Activated CD8-positive, alpha-beta T cell treated with anti-CD3 and anti-CD28 coated beads, Interleukin-2, amount 10 ng/mL, durations not matched to agents 7 days and 5 days (primary cell): ENCODE measurements at regions of chr12 and their contacts with region 1.

Region 1: GRCh38 chr12:49515266-49515665 is 23.6 kb upstream of the KCNH3 start:
- DNase-seq: no peak
- ATAC-seq: no peak
- H3K4me3 Mint-ChIP-seq: no peak overlapping the region
- H3K27ac Mint-ChIP-seq: no peak overlapping the region
- H3K4me1 Mint-ChIP-seq: no peaks in the 10 kb centered on the region
- H3K27me3 Mint-ChIP-seq: no peaks in the 10 kb centered on the region

Region 2: DNA sequence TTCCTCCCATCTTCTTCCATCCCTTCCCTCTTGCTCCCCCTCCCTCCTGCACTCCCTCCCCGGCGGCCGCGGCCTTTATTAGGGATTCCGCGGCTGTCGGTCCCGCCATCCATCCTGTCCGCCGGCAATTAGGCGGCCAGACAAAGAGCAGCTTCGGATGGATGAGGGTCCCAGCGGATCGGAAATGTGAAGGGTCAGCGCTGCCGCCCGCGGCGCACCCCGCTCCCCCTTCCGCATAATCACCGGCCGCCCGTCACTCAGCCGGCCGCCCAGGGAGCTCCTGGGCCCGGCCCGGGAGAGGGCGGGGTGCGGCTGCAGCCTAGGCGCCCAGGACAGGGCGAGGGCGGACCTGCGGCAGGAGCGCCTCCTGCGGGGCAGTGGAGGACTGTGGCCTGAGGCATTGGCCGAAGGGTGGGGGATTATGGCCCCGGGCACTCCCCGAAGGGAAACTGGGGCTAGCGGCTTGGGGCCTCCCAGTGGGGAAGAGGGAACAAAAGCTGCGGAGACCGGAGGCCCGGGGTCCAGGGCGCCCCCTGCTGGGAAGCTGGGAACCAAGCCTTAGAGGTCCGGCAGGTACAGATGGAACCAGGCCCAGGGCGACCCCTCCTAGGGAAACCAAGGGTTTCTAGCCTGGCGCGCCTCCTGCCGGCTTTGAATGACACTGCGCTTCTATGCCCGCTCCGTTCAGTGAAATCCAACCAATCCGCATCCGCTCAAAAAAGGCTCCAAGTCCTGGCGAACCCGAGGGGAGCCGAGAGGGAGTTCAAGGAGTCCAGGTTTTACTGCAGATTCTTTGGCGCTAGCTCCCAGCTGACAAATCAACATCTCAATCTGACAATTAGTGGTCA is 173.0 kb before region 1 on chr12:
- CTCF ChIA-PET with region 1: interaction called, 68 read pairs
- POLR2A ChIA-PET with region 1: no interaction called
- DNase-seq: peak; percentile 84
- ATAC-seq: peak; percentile 73
- H3K4me3 Mint-ChIP-seq: peak overlapping the region; percentile 34
- H3K27ac Mint-ChIP-seq: no peak overlapping the region
- H3K4me1 Mint-ChIP-seq: peaks cover 39% of the 10 kb centered on the region
- H3K27me3 Mint-ChIP-seq: peaks cover 88% of the 10 kb centered on the region

Region 3: GRCh38 chr12:49470986-49471385 is 44.3 kb before region 1 on chr12:
- CTCF ChIA-PET with region 1: interaction called, 17 read pairs
- POLR2A ChIA-PET with region 1: no interaction called
- DNase-seq: no peak
- ATAC-seq: no peak
- H3K4me3 Mint-ChIP-seq: no peak overlapping the region
- H3K27ac Mint-ChIP-seq: no peak overlapping the region
- H3K4me1 Mint-ChIP-seq: no peaks in the 10 kb centered on the region
- H3K27me3 Mint-ChIP-seq: no peaks in the 10 kb centered on the region

Region 4: DNA sequence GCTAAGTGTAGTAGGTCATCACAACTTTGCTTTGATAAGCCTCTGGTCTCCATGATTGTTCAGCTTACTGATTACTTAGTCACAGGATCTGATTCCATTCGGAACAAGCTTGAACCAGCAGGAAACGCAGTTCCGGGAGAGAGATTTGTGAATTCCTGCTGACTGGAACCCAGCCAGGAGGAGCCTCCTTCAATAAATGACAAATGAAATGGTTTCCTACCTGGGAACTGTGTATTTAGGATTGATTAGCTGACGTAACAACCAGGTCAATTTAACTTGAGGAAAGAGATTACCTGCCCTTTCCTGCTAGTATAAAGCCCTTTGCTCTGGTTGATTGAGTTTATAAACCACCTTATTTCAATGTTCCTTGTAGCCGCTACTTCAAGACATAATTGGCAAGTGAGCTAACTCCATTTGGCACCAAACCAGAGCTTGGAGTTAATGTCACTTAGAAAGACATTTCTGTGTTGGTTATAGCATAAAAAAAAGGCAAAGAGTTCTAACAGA is 11.5 kb before region 1 on chr12:
- CTCF ChIA-PET with region 1: interaction called, 48 read pairs
- POLR2A ChIA-PET with region 1: no interaction called
- DNase-seq: no peak
- ATAC-seq: no peak
- H3K4me3 Mint-ChIP-seq: no peak overlapping the region
- H3K27ac Mint-ChIP-seq: no peak overlapping the region
- H3K4me1 Mint-ChIP-seq: peaks cover 9% of the 10 kb centered on the region
- H3K27me3 Mint-ChIP-seq: no peaks in the 10 kb centered on the region

Region 5: DNA sequence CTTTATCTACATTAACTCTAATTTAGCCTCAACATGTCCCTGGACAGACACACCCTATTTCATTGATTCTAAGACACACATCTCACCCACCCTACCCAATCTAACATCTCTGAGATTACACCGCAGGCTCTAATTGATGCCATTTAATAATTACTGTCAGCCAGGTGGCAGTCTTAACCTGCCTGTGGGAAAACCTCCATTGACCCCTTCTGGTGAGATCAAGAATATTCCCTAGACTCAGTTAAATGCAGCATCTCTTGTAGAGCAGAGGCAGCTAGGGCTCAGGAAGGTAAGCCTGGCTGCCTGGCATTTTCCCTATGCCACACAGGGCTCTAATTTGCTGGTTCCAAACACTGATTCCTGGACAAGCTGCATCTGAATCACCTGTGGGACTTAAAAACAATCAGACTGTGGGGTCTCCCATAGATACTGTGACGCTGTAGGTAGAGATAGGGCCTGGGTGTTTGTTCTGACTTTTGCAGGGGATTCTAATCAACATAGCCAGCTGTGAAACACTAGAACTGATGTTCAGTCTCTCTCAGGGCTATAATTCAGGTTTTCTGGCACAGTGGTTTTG is 38.3 kb after region 1 on chr12:
- CTCF ChIA-PET with region 1: interaction called, 11 read pairs
- POLR2A ChIA-PET with region 1: no interaction called
- DNase-seq: peak; percentile 47
- ATAC-seq: peak; percentile 56
- H3K4me3 Mint-ChIP-seq: no peak overlapping the region
- H3K27ac Mint-ChIP-seq: no peak overlapping the region
- H3K4me1 Mint-ChIP-seq: peaks cover 17% of the 10 kb centered on the region
- H3K27me3 Mint-ChIP-seq: peaks cover 4% of the 10 kb centered on the region

Region 6: GRCh38 chr12:49563951-49564685 is 48.9 kb after region 1 on chr12:
- CTCF ChIA-PET with region 1: no interaction called
- POLR2A ChIA-PET with region 1: no interaction called
- DNase-seq: no peak
- ATAC-seq: no peak
- H3K4me3 Mint-ChIP-seq: peak overlapping the region; percentile 62
- H3K27ac Mint-ChIP-seq: peak overlapping the region; percentile 81
- H3K4me1 Mint-ChIP-seq: peaks cover 80% of the 10 kb centered on the region
- H3K27me3 Mint-ChIP-seq: no peaks in the 10 kb centered on the region